MCF 10A (cell line): ENCODE measurements at regions of chr16 and their contacts with region 1.

Region 1: GRCh38 chr16:81366316-81366932 is 51.7 kb downstream of the GAN start:
- DNase-seq: peak; percentile 60
- H3K4me3 Mint-ChIP-seq: no peak overlapping the region
- H3K27ac Mint-ChIP-seq: no peak overlapping the region
- H3K4me1 Mint-ChIP-seq: no peaks in the 10 kb centered on the region
- H3K27me3 Mint-ChIP-seq: no peaks in the 10 kb centered on the region
- CTCF ChIP-seq: peak; percentile 57

Region 2: GRCh38 chr16:81170824-81171223 is 195.6 kb before region 1 on chr16:
- CTCF ChIA-PET with region 1: no interaction called
- POLR2A ChIA-PET with region 1: no interaction called
- intact Hi-C with region 1: no loop called
- DNase-seq: no peak
- H3K4me3 Mint-ChIP-seq: no peak overlapping the region
- H3K27ac Mint-ChIP-seq: no peak overlapping the region
- H3K4me1 Mint-ChIP-seq: peaks cover 7% of the 10 kb centered on the region
- H3K27me3 Mint-ChIP-seq: peaks cover 11% of the 10 kb centered on the region
- CTCF ChIP-seq: no peak

Region 3: DNA sequence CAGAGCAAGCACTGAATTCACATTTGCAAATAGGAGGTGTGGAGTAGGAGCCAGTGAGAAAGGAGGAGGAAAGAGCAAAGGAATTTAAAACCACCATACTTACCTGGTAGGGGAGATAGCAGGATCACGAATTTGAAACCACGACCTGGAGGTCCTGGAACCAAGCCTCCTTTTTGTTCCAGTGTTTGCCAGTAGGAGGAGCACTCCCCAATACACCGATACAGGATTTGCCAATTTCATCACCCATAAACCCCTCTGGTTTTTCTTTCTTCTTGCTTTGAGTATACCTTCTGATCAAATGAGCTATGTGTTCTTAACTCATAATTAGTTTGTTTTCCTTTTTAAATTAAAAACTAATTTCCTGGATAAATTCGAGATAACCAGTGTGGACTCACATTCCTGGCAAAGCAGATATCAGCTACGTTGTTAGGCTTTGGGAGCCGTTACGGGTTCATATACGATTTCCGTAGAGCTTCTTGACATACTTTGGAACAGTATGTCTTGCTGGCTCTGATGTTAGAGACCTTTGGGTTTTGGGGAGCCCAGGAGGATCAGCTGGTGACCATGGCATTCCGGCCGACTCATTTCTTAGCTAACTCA is 105.3 kb before region 1 on chr16:
- CTCF ChIA-PET with region 1: interaction called, 10 read pairs
- POLR2A ChIA-PET with region 1: no interaction called
- intact Hi-C with region 1: loop called (anchors 1 kb)
- DNase-seq: peak; percentile 34
- H3K4me3 Mint-ChIP-seq: no peak overlapping the region
- H3K27ac Mint-ChIP-seq: no peak overlapping the region
- H3K4me1 Mint-ChIP-seq: peaks cover 13% of the 10 kb centered on the region
- H3K27me3 Mint-ChIP-seq: no peaks in the 10 kb centered on the region
- CTCF ChIP-seq: peak; percentile 61

Region 4: DNA sequence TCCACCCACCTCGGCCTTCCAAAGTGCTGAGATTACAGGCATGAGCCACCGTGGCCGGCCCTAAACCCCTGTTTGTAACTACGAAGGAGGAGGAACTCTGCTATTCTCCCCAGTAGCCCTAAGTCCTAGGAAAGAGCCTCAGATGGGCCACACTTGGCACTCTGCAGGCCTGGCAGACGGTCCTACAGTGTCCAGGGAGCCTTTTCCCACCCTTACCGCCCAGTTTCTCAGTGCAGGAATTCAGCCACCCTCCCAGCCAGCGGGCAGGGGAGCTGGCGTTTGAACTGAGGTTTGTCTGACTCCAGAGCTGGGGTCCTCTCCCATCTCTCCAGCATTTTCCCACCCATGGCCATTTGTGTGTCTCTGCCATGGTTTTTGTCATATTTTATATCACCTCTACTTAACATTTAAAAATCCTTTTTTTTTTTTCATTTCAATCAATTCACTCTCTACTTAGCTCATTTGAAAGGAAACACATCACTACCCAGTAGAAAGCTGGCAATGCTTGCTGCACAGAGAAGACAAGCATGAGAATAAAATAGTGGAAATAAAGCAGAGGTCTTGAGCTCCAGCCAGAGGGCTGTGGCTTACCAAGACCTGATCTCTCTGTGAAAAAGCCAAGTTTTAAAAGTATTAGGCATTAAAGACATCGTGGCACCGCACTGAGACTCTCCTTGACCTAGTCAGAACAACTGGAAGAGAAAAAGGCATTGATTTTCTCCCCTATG is 93.0 kb before region 1 on chr16:
- CTCF ChIA-PET with region 1: no interaction called
- POLR2A ChIA-PET with region 1: no interaction called
- intact Hi-C with region 1: no loop called
- DNase-seq: no peak
- H3K4me3 Mint-ChIP-seq: no peak overlapping the region
- H3K27ac Mint-ChIP-seq: no peak overlapping the region
- H3K4me1 Mint-ChIP-seq: peaks cover 5% of the 10 kb centered on the region
- H3K27me3 Mint-ChIP-seq: no peaks in the 10 kb centered on the region
- CTCF ChIP-seq: no peak

Region 5: GRCh38 chr16:81376880-81377279 is 10.5 kb after region 1 on chr16:
- CTCF ChIA-PET with region 1: interaction called, 12 read pairs
- POLR2A ChIA-PET with region 1: no interaction called
- intact Hi-C with region 1: no loop called
- DNase-seq: peak; percentile 77
- H3K4me3 Mint-ChIP-seq: no peak overlapping the region
- H3K27ac Mint-ChIP-seq: no peak overlapping the region
- H3K4me1 Mint-ChIP-seq: no peaks in the 10 kb centered on the region
- H3K27me3 Mint-ChIP-seq: no peaks in the 10 kb centered on the region
- CTCF ChIP-seq: no peak

Region 6: DNA sequence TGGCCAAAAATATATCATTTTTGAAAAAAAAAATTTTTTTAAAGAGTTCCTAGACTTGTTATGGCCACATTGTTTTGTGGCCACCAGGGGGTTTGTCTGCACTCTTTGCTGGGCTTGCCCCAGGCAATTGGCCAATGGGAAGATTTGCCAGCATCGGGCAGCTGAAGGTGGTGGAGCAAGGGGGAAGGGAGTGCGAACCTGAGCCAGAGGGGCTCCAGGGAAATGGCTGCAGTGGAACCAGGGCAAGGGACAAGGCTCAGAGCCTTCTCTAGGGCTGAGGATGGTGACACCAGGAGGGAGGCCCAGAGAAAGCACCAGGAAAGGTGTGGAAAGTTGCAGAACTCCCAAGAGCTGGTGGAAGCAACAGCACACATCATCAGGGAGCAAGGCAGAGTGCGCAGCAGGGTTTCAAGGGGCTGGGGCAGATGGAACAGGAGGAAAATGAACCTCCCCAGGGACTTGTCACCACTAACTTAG is 62.7 kb after region 1 on chr16:
- CTCF ChIA-PET with region 1: no interaction called
- POLR2A ChIA-PET with region 1: no interaction called
- intact Hi-C with region 1: no loop called
- DNase-seq: peak; percentile 44
- H3K4me3 Mint-ChIP-seq: no peak overlapping the region
- H3K27ac Mint-ChIP-seq: no peak overlapping the region
- H3K4me1 Mint-ChIP-seq: peaks cover 4% of the 10 kb centered on the region
- H3K27me3 Mint-ChIP-seq: no peaks in the 10 kb centered on the region
- CTCF ChIP-seq: peak; percentile 23

Region 7: DNA sequence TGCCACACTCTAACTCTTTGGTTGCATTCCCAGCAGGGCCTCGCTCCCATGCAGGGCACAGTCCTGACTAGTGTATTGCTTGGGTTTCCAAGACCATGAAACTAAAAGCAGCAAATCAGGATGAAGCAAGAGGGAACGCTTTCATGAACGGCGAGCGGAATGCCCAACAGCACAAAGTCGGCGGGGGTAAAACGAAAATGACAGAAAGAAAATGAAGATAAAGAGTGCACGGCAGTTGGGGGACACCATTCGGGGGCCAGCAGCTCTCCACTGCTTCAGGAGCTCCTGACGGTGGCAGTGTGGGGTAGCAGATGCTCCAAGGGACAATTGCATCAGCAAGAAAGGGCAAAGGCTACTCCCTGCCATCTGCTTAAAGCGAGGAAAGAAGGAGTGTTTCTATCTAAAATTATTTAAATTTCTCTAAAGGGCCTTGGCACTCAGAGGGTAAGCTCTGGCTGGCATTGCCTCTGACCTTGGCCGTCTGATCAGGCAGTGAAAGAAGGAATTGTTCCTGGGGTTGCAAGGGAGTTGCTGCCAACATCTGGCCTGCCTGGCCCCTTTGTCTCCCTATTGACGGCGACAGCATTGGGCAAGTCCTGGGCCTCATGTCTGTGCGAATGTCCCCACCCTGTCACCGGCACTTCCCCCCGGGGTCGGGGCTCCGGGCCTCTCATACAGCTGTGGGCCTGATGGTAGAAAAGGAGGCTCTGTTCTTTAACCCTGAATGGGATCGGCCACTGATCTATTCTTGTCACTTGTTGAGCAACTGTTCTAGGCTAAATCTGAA is 216.4 kb after region 1 on chr16:
- CTCF ChIA-PET with region 1: no interaction called
- POLR2A ChIA-PET with region 1: no interaction called
- intact Hi-C with region 1: no loop called
- DNase-seq: peak; percentile 16
- H3K4me3 Mint-ChIP-seq: no peak overlapping the region
- H3K27ac Mint-ChIP-seq: peak overlapping the region; percentile 97
- H3K4me1 Mint-ChIP-seq: peaks cover 60% of the 10 kb centered on the region
- H3K27me3 Mint-ChIP-seq: no peaks in the 10 kb centered on the region
- CTCF ChIP-seq: no peak

Region 8: DNA sequence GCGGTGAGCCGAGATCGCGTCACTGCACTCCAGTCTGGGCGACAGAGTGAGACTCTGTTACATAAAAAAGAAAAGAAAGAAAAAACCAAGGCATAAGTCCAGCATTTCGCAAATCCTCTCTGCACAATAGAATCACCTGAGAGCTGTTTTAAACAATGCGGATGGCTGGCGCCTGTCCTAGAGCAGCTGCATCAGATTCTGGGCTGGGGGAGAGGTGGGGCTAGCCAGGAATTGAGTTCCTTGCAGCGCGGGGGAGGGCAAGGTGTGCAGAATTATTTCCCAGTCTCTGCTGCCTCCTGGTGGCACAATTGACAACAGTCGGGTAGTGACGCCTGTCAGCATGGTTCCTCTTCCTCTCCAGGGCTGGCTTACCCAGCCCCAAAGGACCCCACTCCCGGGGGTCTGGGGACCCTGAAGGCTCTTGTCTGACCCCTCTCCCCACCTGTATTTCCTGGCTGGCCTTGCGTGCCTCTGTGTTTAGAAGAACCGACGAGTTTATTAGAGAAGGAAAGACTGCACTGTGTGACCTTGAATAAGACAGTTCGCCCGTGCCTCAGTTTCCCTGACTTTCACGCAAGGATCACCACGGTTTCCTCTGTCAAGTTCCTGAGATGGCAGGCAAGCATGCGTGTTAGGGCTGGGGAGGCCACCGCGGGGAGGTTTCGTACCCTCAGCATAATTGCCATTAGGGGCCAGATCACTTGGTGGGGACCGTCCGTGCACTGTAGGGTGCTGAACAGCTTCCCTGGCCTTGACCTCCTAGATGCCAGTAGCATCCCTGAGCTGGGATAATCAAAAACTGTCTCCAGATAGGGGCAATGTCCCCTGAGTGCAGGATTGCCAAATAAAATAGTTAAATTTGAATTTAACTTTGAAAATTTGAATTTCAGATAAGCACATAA is 371.7 kb after region 1 on chr16:
- CTCF ChIA-PET with region 1: interaction called, 11 read pairs
- POLR2A ChIA-PET with region 1: no interaction called
- intact Hi-C with region 1: loop called (anchors 1 kb)
- DNase-seq: peak; percentile 96
- H3K4me3 Mint-ChIP-seq: peak overlapping the region; percentile 52
- H3K27ac Mint-ChIP-seq: peak overlapping the region; percentile 51
- H3K4me1 Mint-ChIP-seq: no peaks in the 10 kb centered on the region
- H3K27me3 Mint-ChIP-seq: no peaks in the 10 kb centered on the region
- CTCF ChIP-seq: peak; percentile 86